Activated CD8-positive, alpha-beta T cell treated with anti-CD3 and anti-CD28 coated beads for 36 hours (primary cell): ENCODE measurements at regions of chr17 and their contacts with region 1.

Region 1: GRCh38 chr17:79065105-79065670 is 9.4 kb upstream of the ENGASE start:
- DNase-seq: peak; percentile 79
- ATAC-seq: peak; percentile 82
- H3K4me3 Mint-ChIP-seq: peak overlapping the region; percentile 23
- H3K27ac Mint-ChIP-seq: peak overlapping the region; percentile 55
- H3K4me1 Mint-ChIP-seq: peaks cover 5% of the 10 kb centered on the region
- H3K27me3 Mint-ChIP-seq: peaks cover 2% of the 10 kb centered on the region
- CTCF ChIP-seq: peak; percentile 75

Region 2: GRCh38 chr17:79052146-79052545 is 13.0 kb before region 1 on chr17:
- CTCF ChIA-PET with region 1: no interaction called
- POLR2A ChIA-PET with region 1: no interaction called
- intact Hi-C with region 1: no loop called
- DNase-seq: no peak
- ATAC-seq: no peak
- H3K4me3 Mint-ChIP-seq: no peak overlapping the region
- H3K27ac Mint-ChIP-seq: no peak overlapping the region
- H3K4me1 Mint-ChIP-seq: no peaks in the 10 kb centered on the region
- H3K27me3 Mint-ChIP-seq: peaks cover 5% of the 10 kb centered on the region
- CTCF ChIP-seq: no peak

Region 3: DNA sequence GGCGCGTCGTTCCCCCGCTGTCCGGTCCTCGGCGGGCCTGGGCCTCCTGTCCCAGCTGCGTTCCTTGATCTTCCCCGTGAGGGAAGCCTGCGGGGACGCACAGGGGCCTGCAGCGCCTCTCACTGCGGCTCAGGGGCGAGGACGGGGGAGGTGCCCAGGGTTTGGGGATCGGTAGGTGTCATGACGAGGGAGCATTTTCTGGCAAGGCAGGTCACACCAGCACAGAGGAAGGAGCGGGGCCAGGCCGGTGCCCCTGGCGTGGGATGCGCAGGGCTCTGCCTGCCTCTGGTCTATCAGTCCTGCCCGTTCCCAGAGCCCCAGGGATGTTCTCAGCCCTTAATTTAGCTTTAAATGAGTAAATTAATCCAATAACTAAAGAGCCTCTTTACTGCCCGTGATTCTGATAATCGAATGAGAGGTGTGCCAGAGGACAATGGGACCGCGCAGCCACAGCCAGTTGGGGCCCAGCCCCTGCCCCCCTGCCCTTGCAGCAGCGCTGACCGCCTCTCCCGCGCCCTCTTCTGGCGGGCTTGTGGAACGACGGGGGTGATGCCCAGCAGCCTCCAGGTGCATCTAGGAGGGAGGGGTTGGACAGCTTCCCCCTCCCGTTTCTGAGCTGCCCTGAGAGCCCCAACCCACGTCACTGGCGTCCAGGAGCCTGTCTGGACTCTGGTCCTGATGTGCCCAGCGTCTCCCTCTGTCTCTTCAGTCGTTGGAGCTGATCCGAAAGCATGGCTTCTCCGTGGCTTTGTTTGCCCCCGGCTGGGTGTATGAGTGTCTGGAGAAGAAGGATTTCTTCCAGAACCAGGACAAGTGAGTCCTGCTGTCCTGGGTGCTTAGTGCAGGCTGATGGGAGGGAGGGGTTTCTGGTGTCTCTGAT is 17.4 kb after region 1 on chr17:
- CTCF ChIA-PET with region 1: interaction called, 23 read pairs
- POLR2A ChIA-PET with region 1: no interaction called
- intact Hi-C with region 1: no loop called
- DNase-seq: peak; percentile 56
- ATAC-seq: peak; percentile 76
- H3K4me3 Mint-ChIP-seq: no peak overlapping the region
- H3K27ac Mint-ChIP-seq: no peak overlapping the region
- H3K4me1 Mint-ChIP-seq: no peaks in the 10 kb centered on the region
- H3K27me3 Mint-ChIP-seq: no peaks in the 10 kb centered on the region
- CTCF ChIP-seq: peak; percentile 91

Region 4: GRCh38 chr17:79087428-79088143 is 22.4 kb after region 1 on chr17:
- CTCF ChIA-PET with region 1: interaction called, 23 read pairs
- POLR2A ChIA-PET with region 1: no interaction called
- intact Hi-C with region 1: no loop called
- DNase-seq: peak; percentile 85
- ATAC-seq: peak; percentile 93
- H3K4me3 Mint-ChIP-seq: no peak overlapping the region
- H3K27ac Mint-ChIP-seq: no peak overlapping the region
- H3K4me1 Mint-ChIP-seq: peaks cover 2% of the 10 kb centered on the region
- H3K27me3 Mint-ChIP-seq: no peaks in the 10 kb centered on the region
- CTCF ChIP-seq: peak; percentile 80

Region 5: GRCh38 chr17:79114458-79115301 is 49.5 kb after region 1 on chr17:
- CTCF ChIA-PET with region 1: no interaction called
- POLR2A ChIA-PET with region 1: no interaction called
- intact Hi-C with region 1: no loop called
- DNase-seq: no peak
- ATAC-seq: no peak
- H3K4me3 Mint-ChIP-seq: no peak overlapping the region
- H3K27ac Mint-ChIP-seq: no peak overlapping the region
- H3K4me1 Mint-ChIP-seq: no peaks in the 10 kb centered on the region
- H3K27me3 Mint-ChIP-seq: no peaks in the 10 kb centered on the region
- CTCF ChIP-seq: no peak